ENCODE measurements at regions of chr6 and their contacts with region 1.

Region 1: GRCh38 chr6:27230758-27231111 is 16.8 kb upstream of the PRSS16 start:
- DNase-seq: peak; percentile 46
- ATAC-seq: peak; percentile 55
- H3K4me3 ChIP-seq: peak overlapping the region; percentile 34 to 54
- H3K27ac ChIP-seq: peak overlapping the region; percentile 43; the same call in 1 of the 2 replicates
- H3K4me1 ChIP-seq: peaks cover 7 to 28% of the 10 kb centered on the region in 2 experiments; a peak in 3 of 4 replicates
- H3K27me3 ChIP-seq: no peaks in the 10 kb centered on the region
- CTCF ChIP-seq: no peak
- POLR2A ChIP-seq: no peak
- RAD21 ChIP-seq: no peak

Region 2: GRCh38 chr6:26129656-26130055 is 1101.1 kb before region 1 on chr6:
- CTCF ChIA-PET with region 1: no interaction called
- POLR2A ChIA-PET with region 1: no interaction called
- RAD21 ChIA-PET with region 1: no interaction called
- intact Hi-C with region 1: no loop called
- DNase-seq: no peak
- ATAC-seq: no peak
- H3K4me3 ChIP-seq: no peak overlapping the region
- H3K27ac ChIP-seq: no peak overlapping the region
- H3K4me1 ChIP-seq: peaks cover 6 to 34% of the 10 kb centered on the region in 2 experiments
- H3K27me3 ChIP-seq: no peaks in the 10 kb centered on the region
- CTCF ChIP-seq: no peak
- POLR2A ChIP-seq: no peak
- RAD21 ChIP-seq: no peak

Region 3: DNA sequence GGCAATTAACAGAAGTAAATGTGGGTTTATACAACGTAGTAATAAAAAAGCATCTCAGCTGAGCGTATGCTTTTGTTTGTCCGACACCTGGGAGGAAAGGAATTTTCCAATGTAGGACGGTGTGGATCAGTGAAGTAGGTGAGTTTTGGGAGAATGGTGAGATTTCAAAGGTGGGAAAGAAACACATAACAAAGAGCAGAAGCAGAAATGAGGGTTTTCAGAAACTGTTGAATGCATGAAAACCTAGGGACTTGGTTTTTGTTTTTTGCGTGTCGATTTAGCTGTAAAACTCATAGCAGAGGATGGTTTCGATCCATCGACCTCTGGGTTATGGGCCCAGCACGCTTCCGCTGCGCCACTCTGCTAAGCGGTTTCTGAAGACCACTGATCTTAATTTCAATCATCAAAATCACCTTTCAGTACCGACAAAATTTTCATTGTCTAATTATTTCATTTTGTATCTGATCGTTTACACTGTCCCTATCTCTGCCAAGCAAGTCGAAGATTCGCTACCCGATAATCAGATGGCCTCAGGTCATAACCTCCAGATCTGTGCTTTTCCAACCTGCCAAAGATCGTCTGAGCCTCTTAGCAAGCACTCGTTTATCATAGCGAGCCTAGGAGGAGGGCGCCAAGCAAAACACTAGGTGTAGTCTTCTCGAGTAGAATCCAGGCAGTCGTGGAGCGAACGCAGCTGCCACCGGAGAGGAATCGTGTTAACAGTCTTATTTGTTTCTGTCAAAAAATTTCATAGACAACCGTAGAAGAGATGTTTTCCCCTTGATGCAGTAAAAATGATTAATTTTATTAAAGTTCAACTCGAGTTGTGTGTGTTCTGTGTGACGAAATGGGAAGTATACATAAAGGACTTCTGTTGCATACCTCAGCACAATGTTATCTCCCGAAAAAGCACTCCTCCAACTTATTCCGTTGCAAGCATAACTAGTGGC is 102.2 kb after region 1 on chr6:
- CTCF ChIA-PET with region 1: no interaction called
- POLR2A ChIA-PET with region 1: no interaction called
- RAD21 ChIA-PET with region 1: no interaction called
- intact Hi-C with region 1: loop called (anchors 2 kb)
- DNase-seq: peak; percentile 76
- ATAC-seq: peak; percentile 78
- H3K4me3 ChIP-seq: peak overlapping the region; percentile 47 to 58
- H3K27ac ChIP-seq: peak overlapping the region; percentile 34; the same call in 1 of the 2 replicates
- H3K4me1 ChIP-seq: peaks cover 10 to 19% of the 10 kb centered on the region in 2 experiments; a peak in 3 of 4 replicates
- H3K27me3 ChIP-seq: no peaks in the 10 kb centered on the region
- CTCF ChIP-seq: no peak
- POLR2A ChIP-seq: no peak
- RAD21 ChIP-seq: peak; percentile 25

Region 4: DNA sequence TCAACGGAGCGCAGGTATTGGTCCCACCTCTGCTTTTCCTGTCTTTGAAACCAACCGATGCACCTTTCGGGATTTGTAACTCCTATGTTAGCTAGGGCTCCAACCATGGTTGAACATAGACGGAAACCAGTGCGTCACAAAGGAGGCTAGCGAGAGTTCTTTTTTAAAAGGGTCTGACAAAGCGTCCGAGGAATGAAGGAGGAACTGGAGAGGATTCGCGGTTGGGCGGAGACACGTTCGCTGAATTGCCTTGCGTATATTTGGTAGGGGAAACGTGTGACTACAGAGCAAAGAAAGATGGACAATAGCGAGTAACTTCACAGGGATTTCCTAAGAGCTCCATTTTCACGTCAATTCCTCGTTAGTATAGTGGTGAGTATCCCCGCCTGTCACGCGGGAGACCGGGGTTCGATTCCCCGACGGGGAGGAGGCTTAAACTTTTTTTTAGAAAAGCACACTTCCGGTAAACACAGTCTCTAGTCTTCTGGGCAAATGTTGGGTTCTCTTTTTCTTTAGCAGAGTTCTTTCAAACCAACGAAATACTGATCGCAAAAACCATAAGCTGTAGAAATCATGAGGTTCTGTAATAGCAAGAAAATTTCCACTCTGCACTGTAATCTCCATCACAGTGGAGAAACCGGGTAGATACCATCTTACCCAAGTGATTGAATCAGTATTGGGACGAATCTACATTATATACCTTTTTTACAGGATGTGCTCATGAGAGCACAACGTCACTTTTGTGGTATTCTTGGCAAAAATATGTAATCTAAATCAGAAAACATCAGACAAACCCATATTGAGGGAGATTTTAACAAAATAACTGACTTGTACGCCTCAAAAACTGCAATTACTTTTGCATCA is 248.8 kb after region 1 on chr6:
- CTCF ChIA-PET with region 1: no interaction called
- POLR2A ChIA-PET with region 1: no interaction called
- RAD21 ChIA-PET with region 1: no interaction called
- intact Hi-C with region 1: loop called (anchors 2 kb)
- DNase-seq: peak; percentile 84
- ATAC-seq: peak; percentile 77
- H3K4me3 ChIP-seq: peak overlapping the region; percentile 57 to 67
- H3K27ac ChIP-seq: peak overlapping the region; percentile 58
- H3K4me1 ChIP-seq: peaks cover 4 to 11% of the 10 kb centered on the region in 2 experiments; a peak in 3 of 4 replicates
- H3K27me3 ChIP-seq: no peaks in the 10 kb centered on the region
- CTCF ChIP-seq: no peak
- POLR2A ChIP-seq: no peak
- RAD21 ChIP-seq: 0 out of 2 replicates have a peak, but pooled peaks have one; percentile 11

Region 5: DNA sequence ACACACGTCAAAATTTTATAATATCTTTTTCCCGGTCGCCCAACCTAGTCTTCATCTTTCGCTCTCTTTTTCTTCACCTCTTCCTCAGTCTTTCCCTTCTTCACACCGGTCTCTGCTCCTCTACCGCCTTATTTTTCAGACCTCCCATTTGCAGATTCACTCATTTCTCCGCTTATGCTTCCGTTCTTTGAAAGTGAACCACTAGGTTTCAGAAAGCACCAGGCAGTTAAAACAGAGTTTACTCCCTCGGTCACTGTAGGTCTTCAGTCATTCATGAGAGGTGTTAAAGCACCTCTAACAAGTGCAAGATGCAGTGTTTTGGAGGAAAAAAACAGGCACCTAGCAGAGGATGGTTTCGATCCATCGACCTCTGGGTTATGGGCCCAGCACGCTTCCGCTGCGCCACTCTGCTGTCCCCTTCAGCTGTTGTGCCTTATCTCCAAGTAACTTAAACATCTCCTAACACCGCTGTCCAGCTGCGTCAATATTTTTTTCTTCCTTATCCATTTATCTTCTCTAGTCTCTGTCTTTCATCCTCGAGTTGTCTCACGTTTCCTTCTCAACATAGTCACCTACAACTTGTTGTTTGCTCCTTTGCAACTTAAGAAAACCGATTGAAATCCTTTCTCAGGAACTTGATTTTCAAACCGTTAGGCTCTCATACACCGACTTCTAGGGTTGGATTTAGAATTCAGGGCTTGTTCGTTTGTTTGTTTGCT is 361.9 kb after region 1 on chr6:
- CTCF ChIA-PET with region 1: no interaction called
- POLR2A ChIA-PET with region 1: no interaction called
- RAD21 ChIA-PET with region 1: no interaction called
- intact Hi-C with region 1: loop called (anchors 5 kb)
- DNase-seq: no peak
- ATAC-seq: peak; percentile 88
- H3K4me3 ChIP-seq: no peak overlapping the region
- H3K27ac ChIP-seq: no peak overlapping the region
- H3K4me1 ChIP-seq: peaks cover 7 to 30% of the 10 kb centered on the region in 2 experiments
- H3K27me3 ChIP-seq: no peaks in the 10 kb centered on the region
- CTCF ChIP-seq: no peak
- POLR2A ChIP-seq: no peak
- RAD21 ChIP-seq: peak; percentile 8; the same call in 1 of the 2 replicates